Panc1 (cell line): ENCODE measurements at regions of chr12 and their contacts with region 1.

Region 1: GRCh38 chr12:49967042-49967776 is 5.5 kb downstream of the AQP5 start:
- DNase-seq: peak; percentile 57
- ATAC-seq: peak; percentile 84
- H3K4me3 ChIP-seq: peak overlapping the region; percentile 33 to 64
- H3K27ac ChIP-seq: peak overlapping the region; percentile 71
- H3K4me1 ChIP-seq: peaks cover 25% of the 10 kb centered on the region
- H3K27me3 ChIP-seq: no peaks in the 10 kb centered on the region
- CTCF ChIP-seq: peak; percentile 95

Region 2: GRCh38 chr12:49400304-49400703 is 566.9 kb before region 1 on chr12:
- CTCF ChIA-PET with region 1: no interaction called
- POLR2A ChIA-PET with region 1: no interaction called
- in situ Hi-C with region 1: no loop called
- intact Hi-C with region 1: no loop called
- DNase-seq: no peak
- ATAC-seq: no peak
- H3K4me3 ChIP-seq: no peak overlapping the region
- H3K27ac ChIP-seq: no peak overlapping the region
- H3K4me1 ChIP-seq: no peaks in the 10 kb centered on the region
- H3K27me3 ChIP-seq: no peaks in the 10 kb centered on the region
- CTCF ChIP-seq: no peak

Region 3: DNA sequence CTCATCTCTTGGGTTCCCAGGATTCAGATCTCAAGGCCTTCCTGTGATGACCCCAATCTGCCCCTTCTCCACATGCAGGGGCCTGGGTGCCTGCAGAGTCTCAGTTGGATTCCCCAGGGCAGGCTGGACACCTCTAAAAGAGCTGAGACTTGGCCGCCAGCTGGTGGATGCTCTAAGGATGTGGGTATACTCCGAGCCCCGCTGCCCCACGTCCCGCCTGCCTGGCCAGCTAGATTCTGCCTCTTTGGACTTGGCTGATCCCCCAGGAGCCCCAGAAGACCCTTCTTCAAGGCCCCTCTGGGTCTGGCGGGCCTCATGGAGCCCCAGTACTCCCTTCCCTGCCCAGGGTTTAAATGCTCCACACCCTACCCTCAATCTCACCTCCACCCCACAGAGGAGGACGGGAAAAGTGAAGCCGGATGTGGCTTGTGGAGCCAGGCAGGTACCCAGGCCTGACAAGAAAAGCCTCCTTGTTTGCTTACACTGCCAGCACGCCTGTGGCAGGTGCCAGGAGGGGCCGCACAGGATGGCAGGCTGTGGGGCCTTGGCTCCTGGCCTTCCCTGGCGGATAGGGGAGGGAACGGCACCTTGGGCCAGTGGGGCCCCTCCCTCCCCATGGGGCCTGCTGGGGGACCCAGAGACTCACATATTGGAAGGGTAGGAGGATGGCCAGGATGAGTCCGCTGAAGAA is 78.6 kb before region 1 on chr12:
- CTCF ChIA-PET with region 1: interaction called, 10 read pairs
- POLR2A ChIA-PET with region 1: no interaction called
- in situ Hi-C with region 1: no loop called
- intact Hi-C with region 1: no loop called
- DNase-seq: no peak
- ATAC-seq: no peak
- H3K4me3 ChIP-seq: no peak overlapping the region
- H3K27ac ChIP-seq: no peak overlapping the region
- H3K4me1 ChIP-seq: no peaks in the 10 kb centered on the region; the same call in 1 of the 2 replicates
- H3K27me3 ChIP-seq: no peaks in the 10 kb centered on the region
- CTCF ChIP-seq: no peak

Region 4: DNA sequence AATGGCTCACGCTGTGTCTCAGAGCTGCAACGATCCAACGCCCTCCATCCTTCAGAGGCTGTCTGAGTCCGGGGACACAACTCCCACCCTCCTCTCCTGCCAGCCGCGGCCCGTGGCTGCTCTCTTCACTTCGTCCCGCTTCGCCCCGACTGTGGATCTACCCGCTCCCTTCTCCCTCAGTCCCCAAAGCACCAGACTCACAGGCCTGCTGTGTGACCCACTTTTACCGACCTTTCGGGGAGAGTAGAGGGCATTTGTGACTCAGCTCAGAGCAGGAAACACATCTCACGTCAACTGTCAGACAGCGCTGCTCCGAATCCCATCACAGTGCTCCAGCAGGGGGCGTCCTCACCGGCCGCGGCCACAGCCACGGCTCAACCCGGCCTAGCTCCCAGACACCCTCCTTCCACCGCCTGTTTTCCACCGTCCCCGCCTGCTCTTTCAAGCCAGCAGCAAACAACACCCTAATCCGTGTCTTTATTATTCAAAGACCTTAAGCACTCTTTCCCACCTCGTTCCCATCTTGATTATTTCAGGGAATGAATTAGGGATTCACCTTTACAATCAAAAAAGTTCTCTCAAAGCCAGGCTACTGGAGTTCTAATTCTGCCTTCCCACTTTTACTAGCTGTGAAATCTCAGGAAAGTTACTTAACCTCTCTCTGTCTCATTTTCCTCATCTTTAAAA is 21.7 kb before region 1 on chr12:
- CTCF ChIA-PET with region 1: interaction called, 14 read pairs
- POLR2A ChIA-PET with region 1: no interaction called
- in situ Hi-C with region 1: no loop called
- intact Hi-C with region 1: no loop called
- DNase-seq: peak; percentile 61
- ATAC-seq: peak; percentile 99
- H3K4me3 ChIP-seq: peak overlapping the region; percentile 34 to 53
- H3K27ac ChIP-seq: peak overlapping the region; percentile 88
- H3K4me1 ChIP-seq: peaks cover 13% of the 10 kb centered on the region
- H3K27me3 ChIP-seq: no peaks in the 10 kb centered on the region
- CTCF ChIP-seq: peak; percentile 99

Region 5: GRCh38 chr12:50003595-50003994 is 36.4 kb after region 1 on chr12:
- CTCF ChIA-PET with region 1: no interaction called
- POLR2A ChIA-PET with region 1: no interaction called
- in situ Hi-C with region 1: no loop called
- intact Hi-C with region 1: no loop called
- DNase-seq: no peak
- ATAC-seq: no peak
- H3K4me3 ChIP-seq: no peak overlapping the region
- H3K27ac ChIP-seq: no peak overlapping the region
- H3K4me1 ChIP-seq: peaks cover 16% of the 10 kb centered on the region
- H3K27me3 ChIP-seq: no peaks in the 10 kb centered on the region
- CTCF ChIP-seq: no peak

Region 6: GRCh38 chr12:50014342-50014741 is 47.1 kb after region 1 on chr12:
- CTCF ChIA-PET with region 1: interaction called, 12 read pairs
- POLR2A ChIA-PET with region 1: no interaction called
- in situ Hi-C with region 1: no loop called
- intact Hi-C with region 1: no loop called
- DNase-seq: no peak
- ATAC-seq: no peak
- H3K4me3 ChIP-seq: no peak overlapping the region
- H3K27ac ChIP-seq: no peak overlapping the region
- H3K4me1 ChIP-seq: peaks cover 5% of the 10 kb centered on the region; the same call in 1 of the 2 replicates
- H3K27me3 ChIP-seq: no peaks in the 10 kb centered on the region
- CTCF ChIP-seq: no peak

Region 7: GRCh38 chr12:50032639-50033581 is 65.7 kb after region 1 on chr12:
- CTCF ChIA-PET with region 1: no interaction called
- POLR2A ChIA-PET with region 1: no interaction called
- in situ Hi-C with region 1: no loop called
- intact Hi-C with region 1: no loop called
- DNase-seq: no peak
- ATAC-seq: no peak
- H3K4me3 ChIP-seq: no peak overlapping the region
- H3K27ac ChIP-seq: no peak overlapping the region
- H3K4me1 ChIP-seq: no peaks in the 10 kb centered on the region
- H3K27me3 ChIP-seq: no peaks in the 10 kb centered on the region
- CTCF ChIP-seq: no peak

Region 8: GRCh38 chr12:50049254-50050118 is 82.3 kb after region 1 on chr12:
- CTCF ChIA-PET with region 1: no interaction called
- POLR2A ChIA-PET with region 1: no interaction called
- in situ Hi-C with region 1: no loop called
- intact Hi-C with region 1: no loop called
- DNase-seq: no peak
- ATAC-seq: no peak
- H3K4me3 ChIP-seq: no peak overlapping the region
- H3K27ac ChIP-seq: no peak overlapping the region
- H3K4me1 ChIP-seq: no peaks in the 10 kb centered on the region
- H3K27me3 ChIP-seq: no peaks in the 10 kb centered on the region
- CTCF ChIP-seq: no peak

Region 9: GRCh38 chr12:50074936-50075807 is 108.0 kb after region 1 on chr12:
- CTCF ChIA-PET with region 1: interaction called, 30 read pairs
- POLR2A ChIA-PET with region 1: no interaction called
- in situ Hi-C with region 1: no loop called
- intact Hi-C with region 1: loop called (anchors 1 kb)
- DNase-seq: no peak
- ATAC-seq: peak; percentile 93
- H3K4me3 ChIP-seq: no peak overlapping the region
- H3K27ac ChIP-seq: no peak overlapping the region
- H3K4me1 ChIP-seq: 0 out of 2 replicates have a peak, but pooled peaks cover 3% of the 10 kb centered on the region
- H3K27me3 ChIP-seq: no peaks in the 10 kb centered on the region
- CTCF ChIP-seq: peak; percentile 95